HCT116 (cell line): ENCODE measurements at regions of chr4 and their contacts with region 1.

Region 1: GRCh38 chr4:188195389-188195985 is 56.2 kb downstream of the TRIML1 start:
- DNase-seq: no peak
- ATAC-seq: no peak
- H3K4me3 ChIP-seq: no peak overlapping the region
- H3K27ac ChIP-seq: no peak overlapping the region
- H3K4me1 ChIP-seq: peaks cover 0 to 3% of the 10 kb centered on the region in 2 experiments; a peak in 1 of 4 replicates
- H3K27me3 ChIP-seq: no peaks in the 10 kb centered on the region
- CTCF ChIP-seq: no peak
- POLR2A ChIP-seq: no peak
- RAD21 ChIP-seq: no peak

Region 2: DNA sequence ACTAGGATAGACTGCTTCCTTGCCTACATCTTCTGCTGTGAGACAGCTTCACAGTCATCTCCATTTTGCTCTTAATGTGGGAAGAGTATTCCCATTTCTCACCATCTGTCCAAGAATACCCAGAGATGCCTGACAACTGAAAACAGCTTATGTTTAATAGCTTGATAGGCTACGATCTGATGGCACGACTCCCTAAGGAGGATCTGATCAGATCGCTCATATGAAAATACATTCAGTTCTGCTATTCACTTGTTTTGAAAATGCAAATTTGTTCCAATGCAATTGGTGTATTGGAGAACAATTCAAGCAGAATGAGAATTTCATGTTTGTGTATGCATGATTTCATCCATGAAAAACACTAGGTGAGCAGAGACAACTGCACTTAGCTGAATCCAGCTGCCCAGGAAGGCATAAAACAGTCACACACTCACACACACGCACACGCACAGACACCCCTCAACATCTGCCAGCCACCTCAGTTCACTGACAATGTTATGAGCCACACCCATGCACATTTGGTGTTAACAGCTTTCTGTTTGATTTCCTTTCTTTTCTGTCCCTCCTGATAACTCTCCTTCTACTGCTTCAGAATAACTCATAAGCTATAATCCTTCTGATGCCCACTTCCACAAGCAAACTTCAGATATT is 26.6 kb before region 1 on chr4:
- CTCF ChIA-PET with region 1: no interaction called
- POLR2A ChIA-PET with region 1: no interaction called
- RAD21 ChIA-PET with region 1: no interaction called
- intact Hi-C with region 1: loop called (anchors 2 kb)
- DNase-seq: no peak
- ATAC-seq: no peak
- H3K4me3 ChIP-seq: no peak overlapping the region
- H3K27ac ChIP-seq: no peak overlapping the region
- H3K4me1 ChIP-seq: no peaks in the 10 kb centered on the region
- H3K27me3 ChIP-seq: no peaks in the 10 kb centered on the region
- CTCF ChIP-seq: no peak
- POLR2A ChIP-seq: no peak
- RAD21 ChIP-seq: no peak